ENCODE measurements at regions of chr16 and their contacts with region 1.

Region 1: DNA sequence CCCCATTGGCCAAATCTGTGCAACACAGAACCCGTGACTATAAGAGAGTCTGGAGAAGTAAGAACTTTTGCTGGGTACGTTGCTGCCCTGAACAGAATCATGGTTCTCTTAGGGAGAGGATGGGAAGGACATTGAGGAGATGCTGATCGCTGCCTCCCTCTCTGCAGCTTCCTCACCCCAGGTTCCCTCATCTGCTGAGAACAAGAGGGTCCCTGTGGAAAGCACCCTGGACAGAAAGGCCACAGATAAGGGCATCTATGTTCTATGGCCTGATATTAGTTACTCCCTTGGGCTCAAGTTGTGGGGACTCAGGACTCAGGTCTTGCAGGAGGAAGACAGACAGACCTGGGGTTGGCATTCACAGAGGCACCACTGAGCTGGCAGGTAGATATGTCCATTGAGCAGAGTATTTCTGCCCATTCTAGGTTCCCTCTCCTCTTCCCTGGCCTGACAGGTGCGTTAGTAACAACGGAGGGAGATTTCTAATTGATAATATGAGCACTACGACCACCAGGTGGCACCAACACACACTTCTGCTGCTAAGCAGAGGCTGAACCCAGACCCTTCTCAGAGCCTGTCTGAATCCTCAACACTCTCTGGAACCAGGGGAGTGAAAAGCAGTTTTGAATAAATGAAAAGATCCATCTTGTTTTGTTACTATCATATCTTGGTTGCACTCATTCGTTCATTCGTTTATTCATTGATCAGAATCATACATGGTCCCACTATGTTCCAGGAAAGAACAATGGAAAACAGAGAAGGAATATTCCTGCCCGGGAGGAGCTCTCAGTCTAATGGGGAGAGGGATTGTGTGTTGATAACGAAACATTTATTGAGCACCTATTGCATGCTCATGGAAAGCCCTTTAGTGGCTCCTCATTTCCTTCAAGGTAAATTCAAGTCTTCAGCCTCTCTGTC is 56.4 kb downstream of the SLC6A2 start:
- DNase-seq: peak; percentile 34
- H3K4me3 Mint-ChIP-seq: no peak overlapping the region
- H3K27ac Mint-ChIP-seq: no peak overlapping the region
- H3K4me1 Mint-ChIP-seq: no peaks in the 10 kb centered on the region
- H3K27me3 Mint-ChIP-seq: peaks cover 5% of the 10 kb centered on the region

Region 2: DNA sequence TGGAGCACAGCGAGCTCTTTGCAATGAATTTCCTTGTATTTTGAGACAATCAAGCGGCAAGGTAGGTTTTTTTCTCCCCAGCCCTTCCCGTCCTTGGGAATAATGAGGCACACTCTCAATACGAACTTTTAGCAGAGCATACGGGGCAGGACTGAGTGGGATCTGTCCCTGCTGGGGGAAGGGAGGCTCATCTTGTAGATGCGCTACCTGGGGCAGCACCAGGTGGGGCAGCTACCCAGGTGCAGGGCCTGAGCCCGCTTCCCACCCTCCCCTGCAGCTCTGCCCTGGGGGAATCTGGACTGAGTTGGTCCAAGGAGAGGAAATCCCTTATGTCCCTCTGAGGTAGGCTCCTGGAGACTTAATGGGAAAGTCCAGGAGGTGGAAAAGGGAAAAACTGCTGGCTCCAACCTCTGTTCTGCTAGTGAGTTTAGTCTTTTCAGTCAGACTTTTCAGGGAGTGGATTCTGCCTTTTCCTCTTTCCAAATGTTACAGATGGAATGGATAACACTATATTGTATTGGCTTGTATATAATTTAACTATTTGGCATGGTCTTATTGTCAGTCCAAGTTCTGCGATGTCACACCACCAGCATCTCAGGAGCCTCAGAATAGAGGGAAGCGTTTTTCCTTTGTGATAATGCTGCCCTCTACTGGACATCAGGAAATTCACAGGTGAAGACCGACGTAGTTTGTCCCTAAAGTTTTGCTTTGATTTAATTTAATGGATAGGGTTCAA is 130.3 kb after region 1 on chr16:
- intact Hi-C with region 1: loop called (anchors 1 kb)
- DNase-seq: no peak
- H3K4me3 Mint-ChIP-seq: no peak overlapping the region
- H3K27ac Mint-ChIP-seq: no peak overlapping the region
- H3K4me1 Mint-ChIP-seq: no peaks in the 10 kb centered on the region
- H3K27me3 Mint-ChIP-seq: peaks cover 8% of the 10 kb centered on the region

Region 3: DNA sequence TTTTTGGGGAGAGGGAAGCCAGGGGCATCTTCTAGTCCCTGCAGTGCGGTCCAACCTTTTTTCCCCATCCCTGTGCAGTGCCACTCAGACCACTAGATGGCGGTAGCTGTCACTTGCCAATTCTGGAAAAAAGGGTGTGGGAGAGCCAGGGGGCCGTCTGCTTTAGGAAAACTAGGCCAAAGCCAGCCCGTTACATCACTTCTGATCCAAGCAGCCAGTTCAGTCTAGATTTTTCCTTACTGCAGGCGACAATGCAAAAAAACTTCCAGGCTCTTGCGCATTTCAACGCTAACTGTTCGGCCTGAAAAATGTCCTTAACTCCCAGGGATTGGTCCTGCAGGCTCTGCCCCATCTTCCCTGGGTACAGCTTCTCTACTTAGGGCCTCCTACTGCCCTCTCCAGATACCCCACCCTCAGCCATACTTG is 232.2 kb after region 1 on chr16:
- intact Hi-C with region 1: no loop called
- DNase-seq: peak; percentile 12
- H3K4me3 Mint-ChIP-seq: no peak overlapping the region
- H3K27ac Mint-ChIP-seq: no peak overlapping the region
- H3K4me1 Mint-ChIP-seq: no peaks in the 10 kb centered on the region
- H3K27me3 Mint-ChIP-seq: peaks cover 15% of the 10 kb centered on the region